Motor neuron (in vitro differentiated cells): ENCODE measurements at regions of chr14 and their contacts with region 1.

Region 1: GRCh38 chr14:67166450-67166853 is 22.8 kb upstream of the GARIN2 start:
- ATAC-seq: peak in 3 of 8 experiments; percentile 47 to 57 (median 48)
- H3K4me3 ChIP-seq: no peak overlapping the region
- H3K27ac ChIP-seq: no peak overlapping the region
- H3K4me1 ChIP-seq: no peaks in the 10 kb centered on the region

Region 2: GRCh38 chr14:67285876-67286452 is 119.5 kb after region 1 on chr14:
- in situ Hi-C with region 1: loop called in 4 of 9 experiments (anchors 25 kb)
- ATAC-seq: no peak
- H3K4me3 ChIP-seq: no peak overlapping the region
- H3K27ac ChIP-seq: no peak overlapping the region
- H3K4me1 ChIP-seq: peaks cover 0 to 8% of the 10 kb centered on the region in 2 donors

Region 3: DNA sequence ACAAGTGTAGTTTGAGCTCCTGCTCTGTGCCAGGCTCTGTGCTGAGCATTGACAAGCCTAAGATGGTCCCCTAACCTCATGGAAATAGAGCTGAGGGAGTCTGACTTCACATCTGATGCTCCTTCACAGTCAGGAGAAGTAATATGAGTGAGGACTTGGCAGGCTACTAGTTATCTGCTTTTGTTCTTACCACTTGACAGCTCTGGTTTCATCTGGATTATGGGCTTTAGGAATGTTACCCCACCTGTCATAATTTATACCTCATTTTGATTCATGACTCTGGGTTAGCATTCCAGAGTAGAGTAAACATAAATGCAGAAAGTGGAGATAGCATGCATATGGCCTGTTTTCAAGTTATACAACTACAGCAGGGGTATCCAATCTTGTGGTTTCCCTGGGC is 152.7 kb after region 1 on chr14:
- in situ Hi-C with region 1: loop called in 1 of 9 experiments (anchors 25 kb)
- ATAC-seq: peak in 1 of 8 experiments; percentile 75
- H3K4me3 ChIP-seq: no peak overlapping the region
- H3K27ac ChIP-seq: no peak overlapping the region
- H3K4me1 ChIP-seq: no peaks in the 10 kb centered on the region